ENCODE measurements at regions of chr21 and their contacts with region 1.

Region 1: GRCh38 chr21:17688912-17689874 is 76.5 kb upstream of the BTG3 start:
- DNase-seq: peak; percentile 35 to 44
- ATAC-seq: peak in 5 of 8 donors; percentile 37 to 79 (median 73)
- H3K4me3 ChIP-seq: no peak overlapping the region
- H3K27ac ChIP-seq: peak overlapping the region in 3 of 10 donors; percentile 22 to 48 (median 27)
- H3K4me1 ChIP-seq: peaks cover 0 to 19% (median 12%) of the 10 kb centered on the region in 9 donors
- H3K27me3 ChIP-seq: no peaks in the 10 kb centered on the region
- CTCF ChIP-seq: peak in 6 of 9 donors; percentile 18 to 39 (median 22)

Region 2: DNA sequence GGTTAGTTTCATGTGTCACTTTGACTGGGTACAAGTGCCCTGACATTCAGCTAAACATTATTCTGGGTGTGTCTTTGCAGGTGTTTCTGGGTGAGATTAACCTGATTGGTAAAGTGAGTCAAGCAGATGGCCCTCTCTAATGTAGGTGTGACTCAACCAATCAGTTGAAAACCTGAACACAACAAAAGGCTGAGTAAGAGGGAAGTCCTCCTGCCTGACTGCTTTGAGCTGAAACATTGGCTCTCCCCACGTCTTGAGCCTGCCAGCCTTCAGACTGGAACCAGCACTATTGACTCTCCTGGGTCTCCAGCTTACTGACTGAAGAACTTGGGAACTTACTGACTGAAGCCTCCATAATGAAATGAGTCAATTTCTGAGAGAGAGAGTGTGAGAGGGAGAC is 200.0 kb after region 1 on chr21:
- intact Hi-C with region 1: loop called in 1 of 10 experiments (anchors 5 kb)
- DNase-seq: no peak
- ATAC-seq: no peak
- H3K4me3 ChIP-seq: no peak overlapping the region
- H3K27ac ChIP-seq: no peak overlapping the region
- H3K4me1 ChIP-seq: no peaks in the 10 kb centered on the region
- H3K27me3 ChIP-seq: no peaks in the 10 kb centered on the region
- CTCF ChIP-seq: no peak

Measured in heart right ventricle (tissue), 16 donors.